ENCODE measurements at regions of chr3 and their contacts with region 1.

Region 1: GRCh38 chr3:146968204-146968651 is 363.1 kb upstream of the PLSCR5 start:
- DNase-seq: peak; percentile 94
- H3K4me3 ChIP-seq: no peak overlapping the region
- H3K27ac ChIP-seq: peak overlapping the region; percentile 85
- H3K4me1 ChIP-seq: peaks cover 31% of the 10 kb centered on the region
- H3K27me3 ChIP-seq: no peaks in the 10 kb centered on the region
- CTCF ChIP-seq: no peak

Region 2: DNA sequence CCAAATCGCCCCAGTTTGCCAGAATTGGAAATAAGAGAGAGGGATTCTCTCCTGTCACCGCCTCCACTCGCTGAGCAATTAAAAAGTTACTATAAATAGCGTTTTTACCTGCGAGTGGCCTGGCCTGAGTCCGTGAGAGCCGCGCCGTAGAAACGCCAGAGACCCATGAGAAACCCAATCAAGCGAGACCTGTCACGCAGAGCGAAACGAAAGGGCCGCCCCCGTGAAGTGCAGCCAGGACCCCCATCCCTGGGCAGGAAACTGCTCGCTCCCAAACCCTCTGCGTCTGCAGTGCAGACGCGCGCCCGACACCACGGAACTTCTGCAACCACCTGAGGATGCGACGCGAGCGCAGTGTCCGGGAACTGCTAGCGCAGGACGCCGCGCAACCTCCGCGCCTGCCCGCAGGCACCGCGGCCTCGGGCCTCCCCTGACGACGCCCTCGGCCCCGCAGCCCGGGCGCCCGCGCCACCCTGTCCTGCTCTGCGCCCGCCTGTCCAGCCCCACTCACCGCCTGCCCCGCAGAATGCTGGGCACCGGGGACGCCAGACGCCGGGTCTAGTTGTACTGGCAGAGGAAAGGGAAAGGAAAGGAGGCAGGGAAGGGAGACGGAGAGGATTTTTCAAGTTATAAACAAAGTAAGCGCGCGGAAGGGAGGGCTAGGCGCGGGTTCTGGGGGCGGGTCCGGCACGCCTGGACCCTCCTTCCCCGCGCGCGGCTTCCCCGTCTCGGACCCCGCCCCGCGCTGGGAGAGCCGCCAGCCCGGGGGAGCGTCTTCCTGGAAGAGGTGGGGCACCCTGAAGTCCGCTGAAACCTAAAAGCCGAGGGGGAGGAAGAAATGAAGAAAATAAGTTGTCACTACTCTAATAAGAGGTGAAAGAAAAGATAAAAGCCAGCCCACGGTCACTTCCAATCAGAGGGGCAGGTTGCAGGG is 717.5 kb before region 1 on chr3 and contains the start of gene PLSCR4:
- CTCF ChIA-PET with region 1: no interaction called
- POLR2A ChIA-PET with region 1: no interaction called
- intact Hi-C with region 1: no loop called
- DNase-seq: peak; percentile 60
- H3K4me3 ChIP-seq: peak within 1 kb of the TSS; percentile 77
- H3K27ac ChIP-seq: no peak within 1 kb of the TSS
- H3K4me1 ChIP-seq: no peaks in the 10 kb centered on the region
- H3K27me3 ChIP-seq: peaks cover 9% of the 10 kb centered on the region
- CTCF ChIP-seq: no peak
- total RNA-seq, gene PLSCR4: 1.3 and 2.4 TPM in 2 replicates

Region 3: DNA sequence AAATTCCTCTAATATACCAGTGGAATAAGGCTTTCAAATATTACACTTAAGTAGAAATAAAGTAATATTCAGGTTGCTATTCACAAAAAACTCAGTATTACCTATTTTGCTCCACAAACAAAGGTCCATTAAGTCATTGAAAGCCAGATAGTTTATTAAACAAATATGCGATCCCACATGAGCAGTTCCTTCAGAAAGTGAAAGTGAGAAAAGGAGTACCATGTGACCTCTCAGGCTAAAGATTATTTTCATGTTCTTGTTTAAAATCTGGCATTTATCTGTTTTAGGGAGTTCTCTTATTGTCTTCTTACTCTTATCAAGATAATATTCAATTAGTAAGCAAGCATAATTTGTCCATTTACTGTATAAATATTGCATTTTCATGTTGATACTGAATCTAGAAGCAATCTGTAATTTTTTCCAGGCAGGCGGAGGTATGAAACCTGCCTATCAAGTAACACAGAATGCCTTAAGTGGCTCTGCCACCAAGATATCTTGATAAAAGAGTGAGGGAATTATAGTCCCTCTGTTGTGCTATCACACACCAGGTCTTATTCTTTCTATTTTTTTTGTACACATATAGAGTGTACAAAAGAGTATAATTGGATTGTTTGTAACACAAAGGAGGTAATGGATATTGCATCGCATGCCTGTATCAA is 343.0 kb before region 1 on chr3:
- CTCF ChIA-PET with region 1: no interaction called
- POLR2A ChIA-PET with region 1: no interaction called
- intact Hi-C with region 1: no loop called
- DNase-seq: no peak
- H3K4me3 ChIP-seq: no peak overlapping the region
- H3K27ac ChIP-seq: no peak overlapping the region
- H3K4me1 ChIP-seq: no peaks in the 10 kb centered on the region
- H3K27me3 ChIP-seq: no peaks in the 10 kb centered on the region
- CTCF ChIP-seq: no peak

Region 4: DNA sequence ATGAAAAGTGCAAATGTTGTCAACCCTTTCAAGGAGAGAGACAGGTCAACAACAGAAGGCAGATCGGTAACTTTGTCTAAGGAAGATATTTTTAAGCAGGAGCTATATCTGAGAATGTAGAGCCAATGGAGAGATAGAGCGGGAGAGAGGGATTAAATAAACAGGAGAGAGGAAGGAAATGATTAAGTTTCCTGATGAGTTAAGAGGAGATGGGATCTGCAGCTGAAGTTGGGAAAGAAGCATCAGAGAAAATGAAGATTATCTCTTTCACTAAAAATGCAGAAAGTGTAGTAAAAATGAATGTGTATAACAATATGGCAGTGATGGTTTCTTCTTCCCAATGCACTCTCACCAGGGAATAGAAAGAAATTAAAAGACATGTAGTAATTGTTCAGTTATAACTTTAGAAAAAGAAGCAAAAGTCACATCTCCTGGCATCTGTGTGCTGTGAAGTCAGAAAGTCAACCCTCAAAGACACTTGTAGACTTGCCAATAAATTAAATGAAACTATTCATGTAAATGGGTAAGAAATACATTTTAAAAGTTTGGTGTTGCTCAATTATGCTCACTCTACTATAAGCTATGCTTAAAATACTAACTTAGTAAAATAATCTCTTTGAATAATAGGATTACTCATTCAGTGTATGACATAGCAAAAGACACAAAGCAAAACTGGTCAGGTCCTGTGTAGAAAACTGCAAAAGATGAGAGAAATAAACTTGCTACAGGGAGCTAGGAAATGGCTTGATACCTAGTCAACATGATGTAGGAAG is 173.5 kb after region 1 on chr3:
- CTCF ChIA-PET with region 1: no interaction called
- POLR2A ChIA-PET with region 1: no interaction called
- intact Hi-C with region 1: loop called (anchors 5 kb)
- DNase-seq: peak; percentile 71
- H3K4me3 ChIP-seq: no peak overlapping the region
- H3K27ac ChIP-seq: peak overlapping the region; percentile 43
- H3K4me1 ChIP-seq: peaks cover 32% of the 10 kb centered on the region
- H3K27me3 ChIP-seq: no peaks in the 10 kb centered on the region
- CTCF ChIP-seq: no peak

Region 5: GRCh38 chr3:147257944-147258343 is 289.7 kb after region 1 on chr3:
- CTCF ChIA-PET with region 1: no interaction called
- POLR2A ChIA-PET with region 1: no interaction called
- intact Hi-C with region 1: no loop called
- DNase-seq: no peak
- H3K4me3 ChIP-seq: no peak overlapping the region
- H3K27ac ChIP-seq: no peak overlapping the region
- H3K4me1 ChIP-seq: no peaks in the 10 kb centered on the region
- H3K27me3 ChIP-seq: no peaks in the 10 kb centered on the region
- CTCF ChIP-seq: no peak